ENCODE measurements at regions of chr6 and their contacts with region 1.

Region 1: GRCh38 chr6:117602151-117602898 is at the start of gene GOPC:
- DNase-seq: peak; percentile 99
- H3K4me3 ChIP-seq: peak within 1 kb of the TSS; percentile 51 to 94 (median 91)
- H3K27ac ChIP-seq: peak within 1 kb of the TSS; percentile 72
- H3K4me1 ChIP-seq: peaks cover 20% of the 10 kb centered on the region
- H3K27me3 ChIP-seq: peaks cover 0 to 8% of the 10 kb centered on the region in 2 experiments
- CTCF ChIP-seq: peak in 1 of 2 donors; percentile 41
- POLR2A ChIP-seq: peak; percentile 83
- total RNA-seq, gene GOPC: 21.3 and 22.8 TPM in 2 replicates

Region 2: GRCh38 chr6:117265410-117266256 is 336.7 kb before region 1 on chr6 and contains the start of gene VGLL2:
- CTCF ChIA-PET with region 1: interaction called, 3 read pairs
- POLR2A ChIA-PET with region 1: no interaction called
- dilution Hi-C with region 1: no loop called
- intact Hi-C with region 1: loop called (anchors 5 kb)
- DNase-seq: peak; percentile 12
- H3K4me3 ChIP-seq: peak within 1 kb of the TSS in 2 of 3 experiments; percentile 22 to 33
- H3K27ac ChIP-seq: no peak within 1 kb of the TSS
- H3K4me1 ChIP-seq: peaks cover 6% of the 10 kb centered on the region
- H3K27me3 ChIP-seq: peaks cover 81 to 97% of the 10 kb centered on the region in 2 experiments
- CTCF ChIP-seq: peak in 1 of 2 donors; percentile 16
- POLR2A ChIP-seq: no peak
- total RNA-seq, gene VGLL2: not detected in 2 replicates

Region 3: DNA sequence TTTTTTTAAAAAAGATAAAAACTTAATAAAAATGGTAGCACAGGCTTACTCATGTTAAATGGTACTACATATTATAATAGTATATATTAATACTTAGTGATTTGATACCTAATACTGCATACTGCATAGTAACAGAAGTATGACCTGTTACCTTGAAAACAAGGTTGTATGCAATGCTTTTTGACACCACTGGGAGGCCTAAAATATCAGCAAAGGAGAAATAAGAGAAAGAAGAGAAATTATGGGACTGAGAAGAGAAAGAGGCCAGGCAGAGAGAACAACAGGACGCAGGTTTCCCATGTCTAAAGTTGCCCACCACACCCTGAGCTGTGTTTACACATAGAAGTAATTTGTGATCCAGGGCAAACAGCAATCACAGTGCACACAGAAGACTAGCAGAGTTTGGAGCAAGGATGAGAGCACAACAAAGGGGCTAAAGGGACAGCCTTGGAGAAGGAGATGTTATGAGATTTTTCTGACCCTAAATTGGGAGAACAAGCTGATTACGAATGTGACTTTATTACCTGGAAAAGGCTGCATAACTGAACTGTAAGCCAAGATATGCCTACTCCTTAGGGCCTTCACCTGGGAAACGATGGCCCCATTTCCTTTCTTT is 249.8 kb before region 1 on chr6:
- CTCF ChIA-PET with region 1: interaction called, 5 read pairs
- POLR2A ChIA-PET with region 1: no interaction called
- dilution Hi-C with region 1: no loop called
- intact Hi-C with region 1: loop called (anchors 1 kb)
- DNase-seq: peak; percentile 2
- H3K4me3 ChIP-seq: no peak overlapping the region
- H3K27ac ChIP-seq: no peak overlapping the region
- H3K4me1 ChIP-seq: no peaks in the 10 kb centered on the region
- H3K27me3 ChIP-seq: peaks cover 2 to 4% of the 10 kb centered on the region in 2 experiments
- CTCF ChIP-seq: peak in 1 of 2 donors; percentile 22
- POLR2A ChIP-seq: no peak

Region 4: GRCh38 chr6:117449549-117450439 is 152.5 kb before region 1 on chr6:
- CTCF ChIA-PET with region 1: interaction called, 158 read pairs
- POLR2A ChIA-PET with region 1: interaction called, 3 read pairs
- dilution Hi-C with region 1: no loop called
- intact Hi-C with region 1: loop called (anchors 1 kb)
- DNase-seq: peak; percentile 84
- H3K4me3 ChIP-seq: no peak overlapping the region
- H3K27ac ChIP-seq: no peak overlapping the region
- H3K4me1 ChIP-seq: peaks cover 6% of the 10 kb centered on the region
- H3K27me3 ChIP-seq: peaks cover 15 to 30% of the 10 kb centered on the region in 2 experiments
- CTCF ChIP-seq: peak; percentile 41 to 48
- POLR2A ChIP-seq: no peak

Region 5: DNA sequence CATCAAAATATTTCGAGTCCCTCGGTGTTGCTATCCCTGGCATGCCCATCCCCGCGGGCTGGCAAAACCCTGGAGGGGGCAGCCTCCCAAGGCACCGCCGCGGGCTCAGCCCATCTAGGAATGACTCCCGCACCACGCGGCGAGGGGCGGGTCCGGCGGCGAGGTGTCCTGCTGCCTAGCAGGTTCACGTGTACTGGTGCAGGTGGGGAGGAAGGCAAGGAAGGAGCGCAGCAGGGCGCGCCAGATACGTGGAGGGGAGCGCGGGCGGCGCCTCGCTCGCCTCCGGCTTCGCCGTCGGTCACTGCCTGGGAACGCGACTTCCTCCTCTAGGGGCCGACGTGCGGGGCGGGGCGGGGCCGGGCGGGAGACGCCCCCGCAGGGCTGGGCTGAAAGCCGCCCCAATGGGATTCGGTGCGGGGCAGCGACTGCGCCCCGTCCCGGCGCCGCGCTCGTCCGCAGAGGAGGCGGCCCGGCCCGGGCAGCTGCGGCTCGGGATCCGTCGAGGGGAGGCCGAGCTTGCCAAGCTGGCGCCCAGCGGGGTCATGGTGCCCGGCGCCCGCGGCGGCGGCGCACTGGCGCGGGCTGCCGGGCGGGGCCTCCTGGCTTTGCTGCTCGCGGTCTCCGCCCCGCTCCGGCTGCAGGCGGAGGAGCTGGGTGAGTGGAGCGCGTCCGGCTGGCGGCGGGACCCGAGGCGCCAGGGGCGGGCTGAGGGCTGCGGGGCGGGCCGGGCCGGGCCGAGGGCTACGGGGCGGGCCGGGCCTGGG is 119.9 kb before region 1 on chr6 and contains the start of gene DCBLD1:
- CTCF ChIA-PET with region 1: interaction called, 11 read pairs
- POLR2A ChIA-PET with region 1: interaction called, 7 read pairs
- dilution Hi-C with region 1: no loop called
- intact Hi-C with region 1: loop called (anchors 1 kb)
- DNase-seq: peak; percentile 78
- H3K4me3 ChIP-seq: peak within 1 kb of the TSS; percentile 53 to 94 (median 92)
- H3K27ac ChIP-seq: peak within 1 kb of the TSS; percentile 92
- H3K4me1 ChIP-seq: peaks cover 28% of the 10 kb centered on the region
- H3K27me3 ChIP-seq: no peaks in the 10 kb centered on the region
- CTCF ChIP-seq: peak in 1 of 2 donors; percentile 12
- POLR2A ChIP-seq: peak; percentile 78
- total RNA-seq, gene DCBLD1: 44.3 and 55.8 TPM in 2 replicates

Region 6: DNA sequence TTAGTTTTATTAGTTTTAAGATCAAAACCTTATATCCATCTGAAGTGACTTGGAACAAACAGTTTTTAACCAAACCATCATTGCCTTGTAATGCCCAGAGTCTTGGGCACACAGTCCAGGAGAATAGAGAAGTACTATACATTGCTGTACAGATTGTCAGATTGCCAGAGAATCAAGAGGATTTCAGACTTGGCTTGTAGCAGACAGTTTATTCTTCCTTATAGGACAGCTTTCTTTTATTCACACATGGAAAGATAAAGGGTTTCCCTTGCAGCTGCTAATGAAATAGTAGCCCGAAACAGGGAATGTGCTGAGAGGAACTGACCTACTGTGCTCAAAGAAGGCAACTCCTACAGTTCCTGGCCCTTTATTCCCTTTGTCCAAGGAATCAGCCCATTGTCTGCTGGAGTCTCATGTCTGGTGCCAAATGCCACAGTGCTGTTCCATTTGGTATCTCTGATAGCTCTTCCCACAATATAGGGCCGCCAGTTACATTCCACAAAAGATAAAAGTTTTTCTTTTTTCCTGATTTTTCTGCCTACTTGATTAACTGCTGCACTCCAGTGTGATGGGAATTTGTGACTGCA is 89.2 kb before region 1 on chr6:
- CTCF ChIA-PET with region 1: no interaction called
- POLR2A ChIA-PET with region 1: no interaction called
- dilution Hi-C with region 1: no loop called
- intact Hi-C with region 1: no loop called
- DNase-seq: peak; percentile 26
- H3K4me3 ChIP-seq: no peak overlapping the region
- H3K27ac ChIP-seq: no peak overlapping the region
- H3K4me1 ChIP-seq: no peaks in the 10 kb centered on the region
- H3K27me3 ChIP-seq: no peaks in the 10 kb centered on the region
- CTCF ChIP-seq: no peak
- POLR2A ChIP-seq: no peak

Region 7: DNA sequence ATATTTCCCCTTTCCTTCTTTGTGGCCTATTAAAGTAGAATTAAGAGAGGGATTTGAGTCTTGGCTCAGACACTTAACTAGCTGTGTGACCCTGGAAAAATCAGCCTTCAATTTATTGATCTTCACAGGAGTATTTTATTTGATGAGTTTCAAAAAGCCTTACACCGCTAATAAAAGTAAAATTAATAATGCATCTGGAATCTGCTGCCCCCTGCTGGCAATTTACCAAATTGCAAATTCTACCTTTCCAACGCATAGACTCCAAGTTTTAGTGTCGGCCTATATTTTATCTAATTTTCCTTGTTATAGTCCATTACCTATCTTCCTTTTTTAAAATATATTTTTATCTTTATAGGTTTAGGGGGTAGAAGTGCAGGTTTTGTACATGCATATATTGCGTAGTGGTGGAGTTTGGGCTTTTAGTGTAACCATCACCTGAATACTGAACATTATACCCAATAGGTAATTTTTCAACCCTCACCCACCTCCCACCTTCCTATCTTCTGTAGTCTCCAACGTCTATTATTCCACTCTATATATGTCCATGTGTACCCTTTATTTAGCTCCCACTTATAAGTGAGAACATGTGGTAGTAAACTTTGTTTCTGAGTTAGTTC is 46.3 kb before region 1 on chr6:
- CTCF ChIA-PET with region 1: interaction called, 9 read pairs
- POLR2A ChIA-PET with region 1: no interaction called
- dilution Hi-C with region 1: no loop called
- intact Hi-C with region 1: loop called (anchors 2 kb)
- DNase-seq: peak; percentile 68
- H3K4me3 ChIP-seq: no peak overlapping the region
- H3K27ac ChIP-seq: no peak overlapping the region
- H3K4me1 ChIP-seq: peaks cover 25% of the 10 kb centered on the region
- H3K27me3 ChIP-seq: no peaks in the 10 kb centered on the region
- CTCF ChIP-seq: peak; percentile 45 to 59
- POLR2A ChIP-seq: no peak

Region 8: GRCh38 chr6:118387764-118388701 is 785.7 kb after region 1 on chr6:
- CTCF ChIA-PET with region 1: no interaction called
- POLR2A ChIA-PET with region 1: no interaction called
- dilution Hi-C with region 1: no loop called
- intact Hi-C with region 1: loop called (anchors 5 kb)
- DNase-seq: peak; percentile 97
- H3K4me3 ChIP-seq: no peak overlapping the region
- H3K27ac ChIP-seq: peak overlapping the region; percentile 81
- H3K4me1 ChIP-seq: peaks cover 24% of the 10 kb centered on the region
- H3K27me3 ChIP-seq: no peaks in the 10 kb centered on the region
- CTCF ChIP-seq: no peak
- POLR2A ChIP-seq: peak; percentile 50

Measured in endothelial cell of umbilical vein (primary cell).